Dendritic cell treated with granulocyte-macrophage colony-stimulating factor and Interleukin-4, amounts not matched to agents 40 ng/mL and 50 ng/mL, for 4 days (primary cell): ENCODE measurements at regions of chr1 and their contacts with region 1.

Region 1: DNA sequence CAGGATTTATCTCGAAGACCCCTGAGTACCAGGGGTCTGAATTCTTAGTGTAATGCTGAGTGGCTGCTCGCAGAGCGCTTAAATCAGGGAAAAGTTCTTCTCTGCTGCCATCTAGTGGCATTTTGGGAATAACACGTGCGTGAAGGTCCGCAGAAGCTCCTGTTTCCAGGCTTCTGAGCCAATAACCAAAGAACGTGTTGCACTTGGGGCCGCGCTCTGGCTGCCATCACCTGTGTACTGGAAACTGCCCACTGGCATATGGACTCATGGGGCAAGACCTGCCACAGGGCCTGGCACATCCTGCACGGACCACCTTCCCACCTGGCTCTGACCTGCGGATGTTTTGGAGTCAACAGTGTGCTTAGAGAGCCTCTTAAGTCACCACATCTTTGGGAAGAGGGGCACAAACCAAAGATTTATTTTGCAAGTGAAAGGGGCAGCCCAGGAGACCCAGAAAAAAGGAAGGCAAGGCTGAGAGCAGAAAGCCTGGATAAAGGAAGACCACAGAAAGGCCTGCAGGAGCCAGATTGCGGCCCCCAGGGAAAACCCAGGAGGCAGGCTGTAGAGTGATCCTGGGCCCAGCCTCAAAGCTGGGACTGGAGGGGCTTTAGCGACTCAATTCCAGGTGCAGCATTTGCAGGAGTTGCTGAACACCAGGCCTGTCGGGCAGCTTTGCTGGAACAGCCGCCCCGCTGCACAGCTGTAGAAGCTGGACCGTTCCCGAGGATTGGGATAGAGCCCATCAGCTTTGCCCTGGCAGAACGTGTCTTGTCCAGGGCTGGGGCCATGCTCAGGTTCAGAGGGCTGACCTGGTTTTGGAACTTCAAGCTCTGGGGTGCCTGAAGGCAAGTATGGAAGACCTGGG is 13.0 kb downstream of the CHIT1 start:
- H3K4me3 Mint-ChIP-seq: no peak overlapping the region
- H3K27ac Mint-ChIP-seq: no peak overlapping the region
- H3K4me1 Mint-ChIP-seq: peaks cover 35% of the 10 kb centered on the region
- H3K27me3 Mint-ChIP-seq: peaks cover 40% of the 10 kb centered on the region

Region 2: DNA sequence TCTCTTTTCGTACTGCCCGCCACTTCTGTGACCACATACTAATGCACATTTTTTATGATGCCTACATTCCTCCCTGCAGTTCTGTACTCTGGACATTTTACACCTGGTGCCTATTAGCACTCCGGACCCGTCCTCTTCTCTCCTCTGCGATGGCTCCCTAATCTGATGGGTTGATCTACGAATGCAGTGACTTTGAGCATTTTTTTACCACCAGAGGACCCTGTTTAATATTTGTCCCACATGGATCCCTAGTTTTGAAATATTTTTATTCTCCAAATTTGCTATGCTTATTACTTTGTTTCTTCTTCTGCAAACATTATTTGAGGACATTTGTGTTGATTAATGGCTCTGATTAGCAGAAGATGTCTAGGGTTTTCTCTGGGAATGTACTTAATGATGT is 185.0 kb before region 1 on chr1:
- intact Hi-C with region 1: loop called (anchors 2 kb)
- H3K4me3 Mint-ChIP-seq: no peak overlapping the region
- H3K27ac Mint-ChIP-seq: no peak overlapping the region
- H3K4me1 Mint-ChIP-seq: peaks cover 32% of the 10 kb centered on the region
- H3K27me3 Mint-ChIP-seq: peaks cover 36% of the 10 kb centered on the region

Region 3: GRCh38 chr1:203038891-203039608 is 177.5 kb before region 1 on chr1:
- intact Hi-C with region 1: loop called (anchors 1 kb)
- H3K4me3 Mint-ChIP-seq: no peak overlapping the region
- H3K27ac Mint-ChIP-seq: no peak overlapping the region
- H3K4me1 Mint-ChIP-seq: peaks cover 24% of the 10 kb centered on the region
- H3K27me3 Mint-ChIP-seq: peaks cover 43% of the 10 kb centered on the region

Region 4: GRCh38 chr1:203117611-203118575 is 98.6 kb before region 1 on chr1:
- intact Hi-C with region 1: loop called (anchors 1 kb)
- H3K4me3 Mint-ChIP-seq: no peak overlapping the region
- H3K27ac Mint-ChIP-seq: no peak overlapping the region
- H3K4me1 Mint-ChIP-seq: peaks cover 17% of the 10 kb centered on the region
- H3K27me3 Mint-ChIP-seq: peaks cover 67% of the 10 kb centered on the region

Region 5: DNA sequence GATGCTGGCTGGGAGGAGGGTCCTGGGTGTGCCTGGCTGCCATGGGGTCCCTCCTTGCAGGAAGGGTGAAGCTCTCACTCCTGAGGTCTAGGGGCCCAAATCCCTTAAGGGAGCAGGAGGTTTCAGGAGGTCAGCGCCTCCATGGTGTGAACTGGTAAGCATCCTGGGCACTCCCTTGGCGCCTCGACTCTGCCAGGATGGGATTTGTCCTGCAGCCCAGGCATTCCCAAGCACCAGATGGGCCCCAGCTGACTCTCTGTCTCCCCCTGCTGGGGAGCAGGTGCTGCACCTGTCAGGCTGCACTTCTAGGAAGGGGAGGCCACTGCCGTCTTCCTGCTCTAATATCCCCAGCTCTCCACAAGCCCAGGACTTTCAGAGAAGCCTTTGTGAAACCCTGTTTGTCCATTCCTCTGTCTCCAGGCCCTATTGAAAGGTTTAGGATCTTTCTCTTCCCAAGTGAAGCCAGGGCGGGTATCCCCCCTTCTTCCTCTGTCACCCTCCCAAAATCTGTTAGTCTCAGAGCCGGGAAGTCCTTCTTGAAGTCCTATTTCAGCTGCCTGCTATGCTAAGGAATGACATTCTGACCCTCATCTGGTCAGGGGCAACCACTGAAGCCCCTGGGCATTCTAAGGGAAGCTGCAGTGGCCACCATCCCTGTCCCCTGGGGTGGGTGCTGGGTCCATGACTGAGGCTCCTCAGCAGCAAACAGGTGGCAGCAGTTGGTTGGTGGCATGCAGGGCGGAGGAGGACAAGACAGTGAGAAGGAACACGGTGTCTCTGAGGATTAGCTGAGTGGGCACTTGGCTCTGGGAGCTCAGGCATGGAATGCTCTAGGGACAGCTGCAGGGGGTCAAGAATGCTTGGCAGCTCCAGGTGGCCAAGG is 44.1 kb before region 1 on chr1:
- intact Hi-C with region 1: loop called (anchors 2 kb)
- H3K4me3 Mint-ChIP-seq: no peak overlapping the region
- H3K27ac Mint-ChIP-seq: peak overlapping the region; percentile 19
- H3K4me1 Mint-ChIP-seq: peaks cover 43% of the 10 kb centered on the region
- H3K27me3 Mint-ChIP-seq: peaks cover 59% of the 10 kb centered on the region